H1 (cell line): ENCODE measurements at regions of chr12 and their contacts with region 1.

Region 1: GRCh38 chr12:128259556-128260070 is 7.4 kb upstream of the TMEM132C start:
- DNase-seq: peak in 1 of 2 experiments; percentile 72
- H3K4me3 ChIP-seq: no peak overlapping the region
- H3K27ac ChIP-seq: no peak overlapping the region
- H3K4me1 ChIP-seq: 0 out of 7 replicates have a peak, but pooled peaks cover 0 to 3% (median 0%) of the 10 kb centered on the region in 4 experiments
- H3K27me3 ChIP-seq: peaks cover 0 to 3% (median 0%) of the 10 kb centered on the region in 4 experiments; a peak in 3 of 7 replicates
- CTCF ChIP-seq: peak; percentile 34 to 80 (median 78)
- EP300 ChIP-seq: no peak
- POLR2A ChIP-seq: no peak
- RAD21 ChIP-seq: peak; percentile 94 to 96

Region 2: GRCh38 chr12:128168274-128168673 is 91.3 kb before region 1 on chr12:
- CTCF ChIA-PET with region 1: no interaction called
- POLR2A ChIA-PET with region 1: no interaction called
- DNase-seq: no peak
- H3K4me3 ChIP-seq: no peak overlapping the region
- H3K27ac ChIP-seq: no peak overlapping the region
- H3K4me1 ChIP-seq: peaks cover 0 to 17% (median 7%) of the 10 kb centered on the region in 4 experiments; a peak in 4 of 7 replicates
- H3K27me3 ChIP-seq: peaks cover 0 to 3% (median 0%) of the 10 kb centered on the region in 4 experiments; a peak in 1 of 7 replicates
- CTCF ChIP-seq: no peak
- EP300 ChIP-seq: no peak
- POLR2A ChIP-seq: no peak
- RAD21 ChIP-seq: no peak

Region 3: GRCh38 chr12:128365651-128366231 is 106.1 kb after region 1 on chr12:
- CTCF ChIA-PET with region 1: interaction called, 11 read pairs
- POLR2A ChIA-PET with region 1: no interaction called
- DNase-seq: peak in 1 of 2 experiments; percentile 54
- H3K4me3 ChIP-seq: peak overlapping the region; percentile 33 to 57 (median 46); a peak in 7 of 8 replicates
- H3K27ac ChIP-seq: no peak overlapping the region
- H3K4me1 ChIP-seq: peaks cover 2 to 8% (median 4%) of the 10 kb centered on the region in 4 experiments; a peak in 6 of 7 replicates
- H3K27me3 ChIP-seq: peaks cover 0 to 26% (median 19%) of the 10 kb centered on the region in 4 experiments; a peak in 6 of 7 replicates
- CTCF ChIP-seq: no peak
- EP300 ChIP-seq: no peak
- POLR2A ChIP-seq: no peak
- RAD21 ChIP-seq: no peak

Region 4: DNA sequence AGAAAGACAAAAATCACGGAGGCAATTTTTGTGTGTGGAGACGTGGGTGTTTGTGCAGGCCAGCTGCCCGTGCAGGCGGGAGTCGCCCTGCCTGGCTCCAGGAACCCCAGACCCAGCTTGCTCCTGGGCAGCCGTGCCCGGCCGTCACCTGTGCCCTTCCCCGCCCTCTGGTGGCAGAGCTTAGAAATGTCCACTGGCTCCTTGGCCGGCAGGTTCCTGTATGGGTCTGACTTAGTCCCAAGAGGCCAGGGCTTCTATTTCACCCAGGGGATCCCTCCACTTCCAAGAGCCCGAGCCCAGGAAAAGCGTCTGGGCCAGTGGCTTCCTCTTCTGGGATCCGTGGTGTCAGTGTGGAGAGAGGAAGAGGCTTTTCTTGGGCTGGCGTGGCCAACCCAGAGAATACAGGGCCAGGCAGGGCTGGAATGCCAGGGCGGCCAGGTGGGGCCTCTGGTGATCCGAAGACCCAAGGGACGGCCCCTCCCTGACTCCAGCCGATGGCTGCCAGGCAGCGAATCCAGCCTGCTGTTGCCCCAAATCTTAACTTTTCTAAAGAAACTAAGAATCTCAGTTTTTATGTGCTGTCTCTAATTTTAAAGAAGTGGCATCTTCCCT is 128.3 kb after region 1 on chr12:
- CTCF ChIA-PET with region 1: interaction called, 86 read pairs
- POLR2A ChIA-PET with region 1: interaction called, 4 read pairs
- DNase-seq: peak; percentile 60 to 91
- H3K4me3 ChIP-seq: no peak overlapping the region
- H3K27ac ChIP-seq: no peak overlapping the region
- H3K4me1 ChIP-seq: peaks cover 1 to 4% (median 3%) of the 10 kb centered on the region in 4 experiments; a peak in 4 of 7 replicates
- H3K27me3 ChIP-seq: peaks cover 0 to 9% (median 2%) of the 10 kb centered on the region in 4 experiments; a peak in 5 of 7 replicates
- CTCF ChIP-seq: peak; percentile 83 to 95 (median 94)
- EP300 ChIP-seq: no peak
- POLR2A ChIP-seq: no peak
- RAD21 ChIP-seq: peak; percentile 88 to 93

Region 5: DNA sequence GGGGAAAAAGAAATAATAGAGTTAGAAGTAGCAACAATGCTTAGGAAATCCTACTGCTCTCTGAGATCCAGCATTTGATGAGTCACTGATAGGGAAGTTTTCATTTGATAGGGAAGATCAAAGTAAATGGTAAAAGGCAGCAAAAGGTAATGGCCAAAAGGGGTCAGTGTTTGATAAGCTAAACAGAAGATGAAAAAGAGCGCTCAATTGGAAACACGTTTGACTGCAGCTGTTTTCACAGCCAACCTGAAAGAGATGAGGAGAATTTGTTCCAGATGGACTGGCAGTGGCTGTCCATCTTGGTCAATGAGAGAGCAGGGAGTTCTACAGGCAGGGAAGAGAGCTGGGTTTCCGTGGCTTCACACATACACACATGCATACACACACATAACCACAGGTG is 271.6 kb after region 1 on chr12:
- CTCF ChIA-PET with region 1: interaction called, 12 read pairs
- POLR2A ChIA-PET with region 1: no interaction called
- DNase-seq: no peak
- H3K4me3 ChIP-seq: no peak overlapping the region
- H3K27ac ChIP-seq: no peak overlapping the region
- H3K4me1 ChIP-seq: peaks cover 0 to 2% (median 0%) of the 10 kb centered on the region in 4 experiments; a peak in 1 of 7 replicates
- H3K27me3 ChIP-seq: no peaks in the 10 kb centered on the region
- CTCF ChIP-seq: peak in 2 of 3 experiments; percentile 49 to 69; a peak in 3 of 4 replicates
- EP300 ChIP-seq: no peak
- POLR2A ChIP-seq: no peak
- RAD21 ChIP-seq: peak; percentile 85